Tibial artery (tissue), 4 donors: ENCODE measurements at regions of chr20 and their contacts with region 1.

Region 1: DNA sequence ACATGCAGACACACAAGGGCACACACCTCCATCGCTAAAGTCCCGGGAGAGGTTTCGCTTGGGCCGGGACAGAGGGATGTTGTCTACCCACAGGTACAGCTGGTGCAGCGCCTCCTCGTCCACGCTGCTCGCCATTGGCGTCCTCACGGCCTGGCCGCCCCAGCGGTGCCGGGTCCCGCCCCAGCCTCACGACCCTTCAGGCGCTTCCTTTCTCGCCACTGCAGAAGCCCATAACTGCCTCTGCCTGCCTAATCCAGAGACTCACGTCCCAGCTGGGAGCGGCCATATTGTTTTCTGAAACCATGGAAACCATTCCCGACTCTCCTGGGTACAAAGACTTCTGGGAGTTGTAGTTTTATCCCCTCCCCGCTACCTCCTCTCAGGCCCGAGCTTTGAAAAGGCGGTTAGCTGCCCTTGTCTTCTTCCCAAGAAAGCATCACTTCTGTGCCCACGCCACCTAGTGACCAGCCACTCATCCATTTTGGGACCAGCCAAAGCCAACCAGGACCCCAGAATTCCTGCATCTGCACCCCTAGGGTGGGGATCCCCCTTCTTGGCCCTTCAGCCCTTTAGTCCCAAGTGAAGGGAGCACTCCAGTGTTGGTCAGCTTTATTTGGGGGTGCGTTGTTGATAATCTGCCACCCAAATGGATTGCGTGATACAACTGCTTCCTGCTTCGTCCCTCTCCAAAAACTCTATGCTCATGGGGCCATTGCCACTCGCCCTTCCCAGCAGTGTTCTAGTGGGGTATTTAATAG is at the start of gene SPEF1:
- DNase-seq: peak; percentile 83 to 91
- H3K4me3 ChIP-seq: peak within 1 kb of the TSS in 1 of 2 donors; percentile 39
- H3K27ac ChIP-seq: peak within 1 kb of the TSS; percentile 52 to 65
- H3K4me1 ChIP-seq: peaks cover 6 to 68% (median 48%) of the 10 kb centered on the region in 4 donors
- H3K27me3 ChIP-seq: no peaks in the 10 kb centered on the region
- CTCF ChIP-seq: peak; percentile 42 to 58

Region 2: GRCh38 chr20:3616250-3616649 is 165.1 kb before region 1 on chr20:
- intact Hi-C with region 1: no loop called
- DNase-seq: no peak
- H3K4me3 ChIP-seq: no peak overlapping the region
- H3K27ac ChIP-seq: no peak overlapping the region
- H3K4me1 ChIP-seq: no peaks in the 10 kb centered on the region
- H3K27me3 ChIP-seq: no peaks in the 10 kb centered on the region
- CTCF ChIP-seq: no peak

Region 3: DNA sequence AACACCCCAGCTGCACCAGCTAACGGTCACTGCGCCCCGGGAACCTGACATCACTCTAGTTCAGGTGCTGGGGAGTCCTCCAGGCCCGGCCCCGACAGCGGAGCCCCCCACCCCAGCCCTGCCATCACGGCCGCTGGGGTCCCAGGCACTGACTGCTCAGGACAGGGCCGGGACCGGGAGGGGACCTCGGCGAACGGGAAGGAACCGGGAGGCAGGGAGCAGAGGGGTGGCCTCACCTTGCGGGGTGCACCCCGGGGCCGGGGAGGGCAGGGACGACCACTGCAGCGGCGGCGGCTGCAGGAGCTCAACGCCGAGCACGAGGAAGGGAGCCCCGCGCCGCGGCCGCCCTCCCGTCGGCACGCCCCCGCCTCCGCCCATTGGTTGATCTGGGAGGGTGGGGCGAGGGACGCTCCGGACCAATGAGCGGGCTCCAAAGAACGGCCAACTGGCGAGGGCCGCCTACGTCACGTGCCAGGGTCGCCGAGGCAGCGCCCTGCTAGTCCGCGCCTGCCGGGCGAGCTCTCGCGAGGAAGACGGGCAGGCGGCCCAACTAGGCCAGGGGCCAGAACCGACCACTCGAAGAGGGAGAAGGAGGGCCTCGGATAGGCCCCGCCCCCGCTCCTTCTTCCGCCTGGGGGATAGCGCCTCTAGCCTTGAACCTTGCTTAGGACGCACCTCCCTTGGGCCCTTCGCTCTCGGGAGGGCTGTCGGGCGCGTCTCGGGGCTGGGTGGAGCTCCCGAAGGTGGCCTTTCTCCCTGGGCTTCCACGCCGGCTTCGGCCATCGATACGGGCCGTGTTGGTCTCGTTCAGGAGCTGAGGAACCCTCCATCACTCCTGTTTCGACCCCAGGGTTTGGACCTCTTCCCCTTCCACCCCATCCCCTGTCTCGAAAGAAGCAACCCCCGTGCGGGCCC is 13.6 kb before region 1 on chr20 and contains the start of gene ADISSP:
- intact Hi-C with region 1: loop called (anchors 2 kb)
- DNase-seq: peak; percentile 98 to 100
- H3K4me3 ChIP-seq: peak within 1 kb of the TSS; percentile 74 to 81
- H3K27ac ChIP-seq: peak within 1 kb of the TSS; percentile 93 to 96
- H3K4me1 ChIP-seq: peaks cover 0 to 22% (median 19%) of the 10 kb centered on the region in 4 donors
- H3K27me3 ChIP-seq: no peaks in the 10 kb centered on the region
- CTCF ChIP-seq: peak in 1 of 2 experiments; percentile 9